SK-N-SH (cell line): ENCODE measurements at regions of chr9 and their contacts with region 1.

Region 1: GRCh38 chr9:124708633-124709291 is 62.3 kb downstream of the NR6A1 start:
- DNase-seq: peak; percentile 5
- H3K4me3 ChIP-seq: no peak overlapping the region
- H3K27ac ChIP-seq: peak overlapping the region; percentile 67 to 88
- H3K4me1 ChIP-seq: peaks cover 16 to 38% of the 10 kb centered on the region in 2 experiments; a peak in 2 of 4 replicates
- H3K27me3 ChIP-seq: no peaks in the 10 kb centered on the region
- CTCF ChIP-seq: no peak
- EP300 ChIP-seq: peak in 1 of 2 experiments; percentile 81; a peak in 2 of 4 replicates
- RAD21 ChIP-seq: no peak

Region 2: DNA sequence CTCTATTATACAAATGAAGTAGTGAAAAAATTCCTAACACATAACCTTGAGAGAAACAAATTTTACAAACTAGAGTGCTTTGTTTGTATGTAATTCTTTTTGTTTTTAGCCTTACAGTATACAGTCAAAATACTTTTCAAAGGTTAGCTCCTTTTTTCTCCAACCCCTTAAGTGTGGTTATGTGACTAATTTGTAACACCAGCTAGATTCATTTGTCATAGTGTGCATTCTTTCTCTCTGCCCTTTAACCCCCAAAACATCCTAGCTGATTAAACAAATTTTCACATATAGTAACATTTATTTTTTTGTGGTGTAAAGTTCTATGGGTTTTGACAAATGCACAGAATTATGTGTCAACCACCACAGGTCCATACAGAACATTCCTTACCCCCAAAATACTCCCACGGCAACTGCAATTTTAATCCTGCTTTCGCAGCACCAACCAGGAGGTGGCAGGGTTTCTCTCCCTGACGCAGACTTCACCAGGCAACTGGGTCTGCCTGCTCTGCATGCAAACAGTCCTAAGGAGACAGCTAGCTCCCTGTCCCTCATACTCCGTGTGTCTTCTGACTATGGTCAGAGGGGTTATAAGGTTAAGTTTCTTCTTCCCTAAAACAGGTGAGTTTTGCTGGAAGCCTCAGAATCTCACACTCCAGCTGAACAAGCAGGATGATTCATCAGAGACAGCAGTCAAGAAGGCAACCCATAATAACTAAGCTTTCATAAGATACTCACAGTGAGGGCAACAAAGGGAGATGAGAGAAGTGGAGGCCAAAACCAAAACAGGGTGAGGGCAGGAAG is 157.1 kb before region 1 on chr9:
- CTCF ChIA-PET with region 1: interaction called, 52 read pairs
- POLR2A ChIA-PET with region 1: no interaction called
- DNase-seq: peak; percentile 66
- H3K4me3 ChIP-seq: peak overlapping the region in 1 of 2 experiments; percentile 13; a peak in 1 of 4 replicates
- H3K27ac ChIP-seq: peak overlapping the region in 1 of 2 experiments; percentile 33; a peak in 2 of 4 replicates
- H3K4me1 ChIP-seq: peaks cover 3 to 5% of the 10 kb centered on the region in 2 experiments; a peak in 2 of 4 replicates
- H3K27me3 ChIP-seq: no peaks in the 10 kb centered on the region
- CTCF ChIP-seq: peak; percentile 88
- EP300 ChIP-seq: no peak
- RAD21 ChIP-seq: peak; percentile 87

Region 3: GRCh38 chr9:124593651-124594058 is 115.1 kb before region 1 on chr9:
- CTCF ChIA-PET with region 1: interaction called, 20 read pairs
- POLR2A ChIA-PET with region 1: no interaction called
- DNase-seq: no peak
- H3K4me3 ChIP-seq: no peak overlapping the region
- H3K27ac ChIP-seq: no peak overlapping the region
- H3K4me1 ChIP-seq: peaks cover 8 to 19% of the 10 kb centered on the region in 2 experiments; a peak in 3 of 4 replicates
- H3K27me3 ChIP-seq: no peaks in the 10 kb centered on the region
- CTCF ChIP-seq: no peak
- EP300 ChIP-seq: no peak
- RAD21 ChIP-seq: no peak

Region 4: DNA sequence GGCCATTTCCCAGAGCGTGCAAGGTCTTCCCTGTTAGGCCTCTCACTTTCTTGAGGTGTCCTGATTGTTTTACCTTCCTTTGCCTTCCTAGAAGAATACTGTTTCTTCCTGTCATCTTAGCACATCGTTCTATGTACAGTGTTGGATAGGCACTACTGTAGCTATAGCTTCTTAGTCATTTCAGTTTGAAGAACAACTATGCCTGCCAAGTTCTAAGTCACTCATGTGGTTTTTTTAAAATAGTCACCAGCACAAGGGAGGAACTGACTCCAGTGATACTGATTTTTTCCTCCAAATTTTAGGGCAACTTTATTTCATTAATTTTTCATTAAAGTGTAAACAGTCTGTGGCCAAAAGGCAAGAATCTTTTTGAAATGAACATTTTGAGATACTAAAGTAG is 79.2 kb before region 1 on chr9:
- CTCF ChIA-PET with region 1: interaction called, 60 read pairs
- POLR2A ChIA-PET with region 1: no interaction called
- DNase-seq: no peak
- H3K4me3 ChIP-seq: no peak overlapping the region
- H3K27ac ChIP-seq: peak overlapping the region; percentile 4 to 7; a peak in 2 of 4 replicates
- H3K4me1 ChIP-seq: peaks cover 13 to 20% of the 10 kb centered on the region in 2 experiments
- H3K27me3 ChIP-seq: no peaks in the 10 kb centered on the region
- CTCF ChIP-seq: no peak
- EP300 ChIP-seq: no peak
- RAD21 ChIP-seq: no peak

Region 5: DNA sequence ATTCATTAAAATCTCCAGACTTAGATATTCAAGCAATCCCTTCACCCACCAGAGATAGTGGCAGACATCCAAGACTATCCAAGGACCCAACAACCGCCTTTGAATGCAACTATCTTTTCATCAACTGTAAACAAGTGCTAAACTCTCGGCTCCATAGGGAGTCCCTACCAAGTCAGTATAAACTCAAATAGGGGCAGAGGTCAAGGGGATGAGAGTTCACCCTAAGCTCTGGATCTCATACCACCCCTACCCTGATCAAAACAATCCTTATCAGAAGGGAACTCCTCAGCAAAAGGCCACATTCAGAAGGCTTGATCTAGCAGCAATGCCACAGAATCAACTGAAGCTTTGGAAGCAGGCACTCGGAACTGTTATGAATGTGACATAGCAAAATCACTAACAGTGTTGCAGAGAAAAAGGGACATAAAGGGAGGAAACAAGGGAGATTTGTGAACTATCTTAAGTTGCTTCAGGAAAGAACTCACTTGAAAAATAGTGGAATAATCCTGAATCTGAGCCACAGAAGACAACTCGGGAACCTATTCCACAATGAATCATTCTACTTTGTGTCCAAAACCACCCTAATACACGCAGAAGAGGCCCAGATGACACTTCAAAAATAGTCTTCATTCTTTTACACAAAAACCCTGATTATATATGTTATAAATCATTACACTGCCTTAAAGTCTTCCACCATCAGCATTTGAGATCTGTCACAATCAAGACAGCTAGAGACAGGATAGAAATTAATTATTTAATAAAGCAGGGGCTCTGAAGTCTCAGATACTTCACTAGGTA is 12.5 kb after region 1 on chr9:
- CTCF ChIA-PET with region 1: interaction called, 29 read pairs
- POLR2A ChIA-PET with region 1: no interaction called
- DNase-seq: no peak
- H3K4me3 ChIP-seq: peak overlapping the region in 1 of 2 experiments; percentile 22; a peak in 1 of 4 replicates
- H3K27ac ChIP-seq: peak overlapping the region; percentile 70 to 91
- H3K4me1 ChIP-seq: peaks cover 10 to 38% of the 10 kb centered on the region in 2 experiments
- H3K27me3 ChIP-seq: no peaks in the 10 kb centered on the region
- CTCF ChIP-seq: no peak
- EP300 ChIP-seq: peak in 1 of 2 experiments; percentile 58; a peak in 2 of 4 replicates
- RAD21 ChIP-seq: no peak

Region 6: GRCh38 chr9:124754289-124754688 is 45.5 kb after region 1 on chr9:
- CTCF ChIA-PET with region 1: interaction called, 32 read pairs
- POLR2A ChIA-PET with region 1: no interaction called
- DNase-seq: peak; percentile 31
- H3K4me3 ChIP-seq: no peak overlapping the region
- H3K27ac ChIP-seq: peak overlapping the region in 1 of 2 experiments; percentile 78; a peak in 2 of 4 replicates
- H3K4me1 ChIP-seq: peaks cover 7 to 56% of the 10 kb centered on the region in 2 experiments
- H3K27me3 ChIP-seq: no peaks in the 10 kb centered on the region
- CTCF ChIP-seq: peak; percentile 74
- EP300 ChIP-seq: no peak
- RAD21 ChIP-seq: peak; percentile 72